CD14-positive monocyte (primary cell): ENCODE measurements at regions of chr11 and their contacts with region 1.

Region 1: DNA sequence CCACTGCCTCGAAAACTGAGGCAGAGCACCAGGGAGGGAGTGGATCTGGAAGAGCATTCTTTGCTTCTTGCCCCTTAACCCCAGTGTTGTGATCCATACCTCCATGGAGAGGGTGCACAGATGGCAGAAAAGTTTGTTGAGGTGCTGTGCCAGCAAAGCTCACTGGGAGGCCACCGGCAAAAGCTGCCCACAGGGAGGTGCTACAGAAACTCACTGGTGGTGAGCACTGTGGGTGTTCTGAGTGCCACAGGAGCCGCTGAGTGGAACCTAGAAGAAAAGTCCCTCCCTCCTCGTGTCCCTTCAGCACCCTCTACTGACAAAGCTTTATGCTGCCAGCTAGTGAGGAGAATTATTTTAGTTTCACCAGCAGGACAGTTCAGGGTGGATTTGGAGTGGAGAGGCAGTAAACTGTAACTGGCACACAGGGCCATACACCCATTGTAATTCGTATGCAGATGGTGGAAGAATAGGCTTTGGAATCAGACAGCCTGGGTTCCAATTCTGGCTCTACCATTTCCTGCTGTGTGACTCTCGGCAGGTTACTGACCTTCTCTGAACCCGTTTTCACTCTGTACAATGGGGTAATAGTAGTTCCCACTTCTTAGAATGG is 84.6 kb downstream of the SWAP70 start:
- DNase-seq: peak; percentile 57 to 66 (median 63)
- H3K4me3 ChIP-seq: no peak overlapping the region
- H3K4me3 Mint-ChIP-seq: no peak overlapping the region
- H3K27ac ChIP-seq: no peak overlapping the region
- H3K27ac Mint-ChIP-seq: peak overlapping the region in 1 of 7 donors; percentile 43
- H3K4me1 ChIP-seq: peaks cover 17 to 20% of the 10 kb centered on the region in 2 donors
- H3K4me1 Mint-ChIP-seq: peaks cover 30% of the 10 kb centered on the region
- H3K27me3 ChIP-seq: no peaks in the 10 kb centered on the region
- H3K27me3 Mint-ChIP-seq: no peaks in the 10 kb centered on the region
- CTCF ChIP-seq: peak; percentile 75

Region 2: DNA sequence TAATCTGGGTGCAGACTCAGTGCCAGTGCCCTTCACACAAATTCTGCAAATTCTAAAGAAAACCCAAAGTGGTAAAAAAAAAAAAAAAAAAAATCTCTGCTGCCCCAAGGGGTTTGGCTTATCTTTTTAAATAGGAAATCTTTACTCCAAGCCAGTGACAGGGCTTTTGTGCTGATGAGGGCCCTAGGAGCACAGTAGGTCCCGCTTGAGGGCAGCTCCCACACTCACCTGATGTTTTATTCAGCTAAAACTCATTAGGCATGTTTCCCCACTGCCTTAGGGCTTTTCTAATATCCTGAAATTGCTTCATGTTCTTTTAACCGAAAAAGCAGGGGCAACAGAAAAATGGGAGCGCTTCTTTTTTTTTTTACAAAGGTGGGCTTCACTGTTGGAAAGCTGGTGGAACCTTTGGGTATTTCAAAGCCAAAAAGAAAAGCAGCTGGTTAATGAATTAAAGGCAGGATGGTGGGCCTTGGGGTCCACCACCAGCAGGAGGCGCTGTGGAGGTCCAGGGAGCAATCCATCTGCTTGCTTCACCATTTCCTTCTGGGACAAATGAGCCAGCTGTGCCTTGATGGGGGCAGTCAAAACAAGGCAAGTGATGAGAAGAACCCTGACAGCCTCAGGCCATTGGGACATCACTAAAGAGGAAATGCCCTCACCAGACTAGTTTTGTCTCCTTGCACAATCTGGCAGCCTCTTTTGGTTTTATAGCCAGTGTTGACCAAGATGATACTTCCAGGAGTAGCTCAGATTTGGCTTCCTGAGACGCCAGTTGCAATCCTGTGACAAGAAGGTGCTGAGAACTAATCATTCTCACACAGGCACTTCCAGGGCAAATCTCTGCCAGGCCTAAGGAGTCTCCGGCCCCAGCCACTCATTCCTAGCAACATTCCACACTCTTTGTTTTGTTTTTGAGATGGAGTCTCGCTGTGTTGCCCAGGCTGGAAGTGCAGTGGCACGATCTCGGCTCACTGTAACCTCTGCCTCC is 213.4 kb before region 1 on chr11:
- intact Hi-C with region 1: loop called (anchors 2 to 10 kb)
- DNase-seq: peak; percentile 77 to 91 (median 86)
- H3K4me3 ChIP-seq: no peak overlapping the region
- H3K4me3 Mint-ChIP-seq: no peak overlapping the region
- H3K27ac ChIP-seq: peak overlapping the region in 1 of 2 donors; percentile 2
- H3K27ac Mint-ChIP-seq: peak overlapping the region in 6 of 7 donors; percentile 14 to 68 (median 56)
- H3K4me1 ChIP-seq: peaks cover 8 to 11% of the 10 kb centered on the region in 2 donors
- H3K4me1 Mint-ChIP-seq: peaks cover 10% of the 10 kb centered on the region
- H3K27me3 ChIP-seq: no peaks in the 10 kb centered on the region
- H3K27me3 Mint-ChIP-seq: peaks cover 2 to 5% (median 2%) of the 10 kb centered on the region in 3 donors
- CTCF ChIP-seq: peak; percentile 94